WTC11 (cell line): ENCODE measurements at regions of chr13 and their contacts with region 1.

Region 1: GRCh38 chr13:81957133-81957532 is 1616.2 kb upstream of the SPRY2 start:
- DNase-seq: peak; percentile 21
- ATAC-seq: peak; percentile 100
- H3K4me3 Mint-ChIP-seq: no peak overlapping the region
- H3K27ac Mint-ChIP-seq: no peak overlapping the region
- H3K4me1 Mint-ChIP-seq: peaks cover 2% of the 10 kb centered on the region; the same call in 1 of the 2 replicates
- H3K27me3 Mint-ChIP-seq: no peaks in the 10 kb centered on the region; the same call in 1 of the 2 replicates
- CTCF ChIP-seq: peak; percentile 45

Region 2: DNA sequence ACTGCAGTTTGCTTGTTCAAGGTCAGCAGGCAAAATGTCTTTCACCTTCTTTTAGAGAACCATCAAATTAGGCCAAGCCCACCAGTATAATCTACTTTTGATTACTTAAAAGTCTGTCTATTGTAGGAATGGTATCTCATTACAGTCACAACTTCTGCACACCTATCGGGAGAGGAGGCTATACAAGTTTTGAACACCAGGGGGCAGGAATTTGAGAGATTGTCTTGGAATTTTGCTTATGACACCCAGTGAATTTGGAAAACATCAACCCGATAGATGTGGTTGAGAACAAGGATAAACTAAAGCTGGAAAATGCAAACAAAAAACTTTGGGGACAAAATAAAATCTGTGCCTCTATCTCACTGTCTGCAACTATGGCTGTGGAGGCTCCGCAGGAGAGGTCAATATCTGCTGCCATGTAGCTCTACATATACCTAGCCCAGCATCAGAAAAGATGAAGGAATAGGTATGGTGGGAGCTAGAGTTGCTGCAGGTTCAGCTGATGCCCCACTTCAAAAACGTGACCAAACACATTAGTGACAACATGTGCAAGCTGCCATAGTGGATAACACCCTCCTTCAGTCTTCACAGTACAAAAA is 317.1 kb before region 1 on chr13:
- CTCF ChIA-PET with region 1: interaction called, 15 read pairs
- POLR2A ChIA-PET with region 1: no interaction called
- DNase-seq: peak; percentile 13
- ATAC-seq: peak; percentile 56
- H3K4me3 Mint-ChIP-seq: no peak overlapping the region
- H3K27ac Mint-ChIP-seq: no peak overlapping the region
- H3K4me1 Mint-ChIP-seq: no peaks in the 10 kb centered on the region
- H3K27me3 Mint-ChIP-seq: no peaks in the 10 kb centered on the region
- CTCF ChIP-seq: peak; percentile 54

Region 3: DNA sequence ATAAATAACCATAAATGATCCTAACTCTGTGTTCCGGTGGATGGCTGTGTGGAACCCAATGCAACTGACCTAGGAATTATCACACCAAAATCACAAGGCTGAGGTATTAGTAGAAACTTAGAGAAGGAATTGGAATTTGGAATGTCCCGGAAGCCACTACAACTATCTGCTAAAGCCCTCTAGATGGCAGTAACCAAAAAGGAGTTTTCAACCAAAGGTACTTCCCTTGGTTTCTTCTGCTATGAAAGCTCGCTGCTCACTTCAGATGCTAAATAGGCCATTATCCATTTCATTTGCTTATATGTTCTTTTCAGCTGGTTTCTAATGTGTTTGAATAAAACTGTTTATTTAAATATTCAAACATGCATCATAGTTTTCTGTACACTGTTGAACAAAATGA is 27.1 kb before region 1 on chr13:
- CTCF ChIA-PET with region 1: interaction called, 13 read pairs
- POLR2A ChIA-PET with region 1: no interaction called
- DNase-seq: no peak
- ATAC-seq: peak; percentile 94
- H3K4me3 Mint-ChIP-seq: no peak overlapping the region
- H3K27ac Mint-ChIP-seq: peak overlapping the region; percentile 87
- H3K4me1 Mint-ChIP-seq: peaks cover 23% of the 10 kb centered on the region
- H3K27me3 Mint-ChIP-seq: no peaks in the 10 kb centered on the region
- CTCF ChIP-seq: no peak